ENCODE measurements at regions of chr2 and their contacts with region 1.

Region 1: GRCh38 chr2:182565906-182566567 is 139.2 kb upstream of the PDE1A start:
- DNase-seq: no peak
- ATAC-seq: no peak
- H3K4me3 ChIP-seq: no peak overlapping the region
- H3K27ac ChIP-seq: no peak overlapping the region
- H3K4me1 ChIP-seq: no peaks in the 10 kb centered on the region
- H3K27me3 ChIP-seq: no peaks in the 10 kb centered on the region
- CTCF ChIP-seq: no peak
- EP300 ChIP-seq: no peak
- POLR2A ChIP-seq: no peak
- RAD21 ChIP-seq: no peak

Region 2: GRCh38 chr2:182581196-182581935 is 15.3 kb after region 1 on chr2:
- CTCF ChIA-PET with region 1: no interaction called
- POLR2A ChIA-PET with region 1: no interaction called
- RAD21 ChIA-PET with region 1: interaction called, 3 read pairs
- SMC1A ChIA-PET with region 1: interaction called, 10 read pairs
- in situ Hi-C with region 1: no loop called
- intact Hi-C with region 1: no loop called
- DNase-seq: no peak
- ATAC-seq: no peak
- H3K4me3 ChIP-seq: no peak overlapping the region
- H3K27ac ChIP-seq: no peak overlapping the region
- H3K4me1 ChIP-seq: no peaks in the 10 kb centered on the region
- H3K27me3 ChIP-seq: peaks cover 0 to 2% of the 10 kb centered on the region in 2 experiments; a peak in 1 of 4 replicates
- CTCF ChIP-seq: no peak
- EP300 ChIP-seq: no peak
- POLR2A ChIP-seq: no peak
- RAD21 ChIP-seq: no peak

Region 3: GRCh38 chr2:182666674-182667314 is 100.8 kb after region 1 on chr2:
- CTCF ChIA-PET with region 1: no interaction called
- POLR2A ChIA-PET with region 1: no interaction called
- RAD21 ChIA-PET with region 1: no interaction called
- SMC1A ChIA-PET with region 1: no interaction called
- in situ Hi-C with region 1: no loop called
- intact Hi-C with region 1: no loop called
- DNase-seq: no peak
- ATAC-seq: peak; percentile 89
- H3K4me3 ChIP-seq: no peak overlapping the region
- H3K27ac ChIP-seq: no peak overlapping the region
- H3K4me1 ChIP-seq: no peaks in the 10 kb centered on the region
- H3K27me3 ChIP-seq: peaks cover 0 to 1% of the 10 kb centered on the region in 2 experiments; a peak in 2 of 4 replicates
- CTCF ChIP-seq: peak; percentile 43 to 64 (median 55); a peak in 5 of 6 replicates
- EP300 ChIP-seq: no peak
- POLR2A ChIP-seq: no peak
- RAD21 ChIP-seq: peak; percentile 67